ENCODE measurements at regions of chr3 and their contacts with region 1.

Region 1: DNA sequence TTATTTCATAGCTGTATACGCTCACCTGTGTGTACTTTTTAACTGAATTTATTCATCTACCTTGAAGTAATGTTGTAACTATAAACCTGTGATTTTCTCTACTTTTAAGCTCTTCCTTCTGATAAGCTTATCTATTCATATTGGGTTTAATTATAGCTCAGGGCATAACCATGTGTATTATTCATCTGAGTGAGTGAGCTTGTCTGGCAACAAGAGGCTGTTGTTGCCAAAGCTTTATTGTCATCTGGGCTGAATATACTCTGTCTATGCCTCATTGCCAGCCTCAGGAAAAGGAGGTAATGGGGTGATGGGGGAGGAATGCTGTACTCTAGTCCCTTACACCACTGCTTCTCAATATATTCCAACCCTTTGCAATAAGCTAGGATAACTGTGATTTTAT is 292.4 kb downstream of the UBE2E2 start:
- DNase-seq: peak; percentile 75
- H3K4me3 ChIP-seq: no peak overlapping the region
- H3K27ac ChIP-seq: no peak overlapping the region
- H3K4me1 ChIP-seq: peaks cover 11% of the 10 kb centered on the region
- H3K27me3 ChIP-seq: no peaks in the 10 kb centered on the region
- CTCF ChIP-seq: no peak
- POLR2A ChIP-seq: no peak

Region 2: GRCh38 chr3:23474580-23475357 is 20.7 kb before region 1 on chr3:
- CTCF ChIA-PET with region 1: no interaction called
- POLR2A ChIA-PET with region 1: no interaction called
- dilution Hi-C with region 1: no loop called
- intact Hi-C with region 1: loop called (anchors 1 kb)
- DNase-seq: no peak
- H3K4me3 ChIP-seq: no peak overlapping the region
- H3K27ac ChIP-seq: no peak overlapping the region
- H3K4me1 ChIP-seq: no peaks in the 10 kb centered on the region
- H3K27me3 ChIP-seq: no peaks in the 10 kb centered on the region
- CTCF ChIP-seq: no peak
- POLR2A ChIP-seq: no peak